ENCODE measurements at regions of chr9 and their contacts with region 1.

Region 1: DNA sequence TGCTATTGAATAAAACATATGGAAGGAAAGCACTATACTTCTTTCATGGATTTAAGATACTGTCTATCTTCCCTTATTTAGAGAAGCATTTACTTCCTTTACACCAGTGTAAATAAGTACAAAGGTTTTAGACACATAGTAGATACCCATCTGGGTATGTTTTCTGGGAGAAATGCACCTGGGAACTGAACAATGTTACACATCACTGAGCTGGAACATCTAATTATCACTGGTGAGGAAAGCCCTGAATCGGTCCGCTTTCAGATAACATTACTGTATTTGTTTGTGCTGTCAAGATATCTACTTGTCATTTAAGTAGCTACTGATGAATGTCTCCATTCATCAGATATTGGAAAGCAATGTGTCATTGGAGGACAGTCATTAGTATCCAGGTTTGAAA is 964.7 kb upstream of the PTPRD start:
- DNase-seq: no peak
- ATAC-seq: no peak
- H3K4me3 ChIP-seq: no peak overlapping the region
- H3K4me3 Mint-ChIP-seq: no peak overlapping the region
- H3K27ac ChIP-seq: no peak overlapping the region
- H3K27ac Mint-ChIP-seq: no peak overlapping the region
- H3K4me1 ChIP-seq: no peaks in the 10 kb centered on the region
- H3K4me1 Mint-ChIP-seq: no peaks in the 10 kb centered on the region
- H3K27me3 ChIP-seq: no peaks in the 10 kb centered on the region
- H3K27me3 Mint-ChIP-seq: no peaks in the 10 kb centered on the region
- CTCF ChIP-seq: no peak

Region 2: DNA sequence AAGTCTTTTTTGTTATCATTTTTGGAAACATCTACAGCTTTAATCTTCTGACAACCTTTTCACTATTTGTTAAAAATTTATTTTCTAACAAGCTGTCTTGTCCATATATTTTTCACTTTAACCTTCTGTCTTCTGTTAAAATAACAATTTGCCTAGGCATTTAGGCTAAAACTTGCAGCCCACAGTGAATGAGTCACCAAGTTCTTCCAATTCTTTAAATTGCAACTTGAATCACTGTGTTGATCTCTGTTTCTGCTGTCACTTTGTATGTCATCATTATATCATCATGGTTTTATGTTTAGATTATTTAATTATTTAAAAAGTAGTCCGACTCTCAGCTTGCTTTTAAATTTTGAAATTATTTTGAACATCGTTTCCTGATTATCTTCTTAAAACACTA is 491.0 kb before region 1 on chr9:
- CTCF ChIA-PET with region 1: no interaction called
- POLR2A ChIA-PET with region 1: no interaction called
- intact Hi-C with region 1: no loop called
- DNase-seq: no peak
- ATAC-seq: no peak
- H3K4me3 ChIP-seq: no peak overlapping the region
- H3K4me3 Mint-ChIP-seq: no peak overlapping the region
- H3K27ac ChIP-seq: no peak overlapping the region
- H3K27ac Mint-ChIP-seq: no peak overlapping the region
- H3K4me1 ChIP-seq: no peaks in the 10 kb centered on the region
- H3K4me1 Mint-ChIP-seq: no peaks in the 10 kb centered on the region
- H3K27me3 ChIP-seq: no peaks in the 10 kb centered on the region
- H3K27me3 Mint-ChIP-seq: no peaks in the 10 kb centered on the region
- CTCF ChIP-seq: no peak

Region 3: DNA sequence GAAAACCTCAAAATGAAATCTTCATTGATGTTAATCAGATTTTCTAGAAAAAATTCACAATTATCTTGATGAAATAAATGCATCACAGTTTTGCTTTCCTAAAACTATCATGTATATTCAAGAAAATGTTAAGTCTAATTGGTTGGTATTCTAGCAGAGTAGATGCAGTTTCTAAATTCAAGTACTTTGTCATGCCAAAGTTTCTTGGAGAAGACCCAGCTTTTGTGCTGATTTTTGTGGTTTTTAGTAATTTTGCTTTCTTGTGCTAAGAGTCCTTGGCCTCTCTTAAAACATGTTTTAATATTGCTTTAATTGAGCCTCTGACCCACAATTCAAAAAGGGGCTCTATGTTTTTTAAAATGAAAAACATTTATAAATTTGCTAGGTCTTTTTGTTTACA is 40.0 kb before region 1 on chr9:
- CTCF ChIA-PET with region 1: no interaction called
- POLR2A ChIA-PET with region 1: no interaction called
- intact Hi-C with region 1: loop called in 1 of 2 experiments (anchors 5 kb)
- DNase-seq: no peak
- ATAC-seq: no peak
- H3K4me3 ChIP-seq: no peak overlapping the region
- H3K4me3 Mint-ChIP-seq: no peak overlapping the region
- H3K27ac ChIP-seq: no peak overlapping the region
- H3K27ac Mint-ChIP-seq: no peak overlapping the region
- H3K4me1 ChIP-seq: no peaks in the 10 kb centered on the region
- H3K4me1 Mint-ChIP-seq: no peaks in the 10 kb centered on the region
- H3K27me3 ChIP-seq: no peaks in the 10 kb centered on the region
- H3K27me3 Mint-ChIP-seq: no peaks in the 10 kb centered on the region
- CTCF ChIP-seq: no peak

Region 4: GRCh38 chr9:11735391-11735790 is 157.9 kb after region 1 on chr9:
- CTCF ChIA-PET with region 1: no interaction called
- POLR2A ChIA-PET with region 1: no interaction called
- intact Hi-C with region 1: no loop called
- DNase-seq: no peak
- ATAC-seq: no peak
- H3K4me3 ChIP-seq: no peak overlapping the region
- H3K4me3 Mint-ChIP-seq: no peak overlapping the region
- H3K27ac ChIP-seq: no peak overlapping the region
- H3K27ac Mint-ChIP-seq: no peak overlapping the region
- H3K4me1 ChIP-seq: no peaks in the 10 kb centered on the region
- H3K4me1 Mint-ChIP-seq: no peaks in the 10 kb centered on the region
- H3K27me3 ChIP-seq: no peaks in the 10 kb centered on the region
- H3K27me3 Mint-ChIP-seq: no peaks in the 10 kb centered on the region
- CTCF ChIP-seq: no peak

Measured in CD4-positive, alpha-beta T cell (primary cell).